IMR-90 (cell line): ENCODE measurements at regions of chr18 and their contacts with region 1.

Region 1: GRCh38 chr18:21851327-21851972 is 110.9 kb downstream of the MIB1 start:
- DNase-seq: peak; percentile 11
- ATAC-seq: peak; percentile 48
- H3K4me3 ChIP-seq: no peak overlapping the region
- H3K27ac ChIP-seq: no peak overlapping the region
- H3K4me1 ChIP-seq: no peaks in the 10 kb centered on the region
- H3K27me3 ChIP-seq: no peaks in the 10 kb centered on the region
- CTCF ChIP-seq: peak; percentile 38
- POLR2A ChIP-seq: no peak
- RAD21 ChIP-seq: no peak

Region 2: DNA sequence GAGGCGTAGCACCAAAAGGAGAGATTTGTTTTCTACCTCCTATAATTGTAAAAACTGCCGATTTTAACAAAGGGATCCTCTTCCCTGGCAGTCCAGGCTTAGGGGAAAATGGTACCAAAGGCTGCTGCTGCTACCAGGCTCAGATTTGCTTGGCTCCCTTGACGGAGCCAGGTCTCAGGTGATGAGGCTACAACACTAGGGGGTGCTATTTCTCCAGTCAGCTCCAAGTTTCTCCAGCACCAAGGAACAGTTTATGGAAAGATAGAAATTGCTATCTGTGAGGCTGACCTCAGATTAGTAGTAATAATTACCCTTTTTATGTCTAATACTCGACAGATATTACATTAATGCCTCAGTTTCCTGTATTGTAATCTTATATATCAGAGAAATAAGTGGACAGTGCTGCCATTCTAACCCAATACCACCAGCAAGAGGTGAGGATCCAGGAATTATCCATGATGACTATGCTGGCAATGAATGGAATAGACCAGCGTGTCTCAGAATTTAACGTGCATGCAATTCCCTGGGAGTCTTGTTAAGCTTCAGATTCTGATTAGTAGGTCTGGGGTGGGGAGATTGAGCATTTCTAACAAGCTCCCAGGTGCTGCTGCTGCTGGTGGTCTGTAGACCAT is 362.2 kb before region 1 on chr18:
- CTCF ChIA-PET with region 1: no interaction called
- POLR2A ChIA-PET with region 1: no interaction called
- dilution Hi-C with region 1: no loop called
- in situ Hi-C with region 1: no loop called
- intact Hi-C with region 1: loop called (anchors 5 kb)
- DNase-seq: peak; percentile 66
- ATAC-seq: peak; percentile 77
- H3K4me3 ChIP-seq: no peak overlapping the region
- H3K27ac ChIP-seq: no peak overlapping the region
- H3K4me1 ChIP-seq: 0 out of 2 replicates have a peak, but pooled peaks cover 2% of the 10 kb centered on the region
- H3K27me3 ChIP-seq: no peaks in the 10 kb centered on the region
- CTCF ChIP-seq: peak; percentile 76
- POLR2A ChIP-seq: no peak
- RAD21 ChIP-seq: peak; percentile 71

Region 3: DNA sequence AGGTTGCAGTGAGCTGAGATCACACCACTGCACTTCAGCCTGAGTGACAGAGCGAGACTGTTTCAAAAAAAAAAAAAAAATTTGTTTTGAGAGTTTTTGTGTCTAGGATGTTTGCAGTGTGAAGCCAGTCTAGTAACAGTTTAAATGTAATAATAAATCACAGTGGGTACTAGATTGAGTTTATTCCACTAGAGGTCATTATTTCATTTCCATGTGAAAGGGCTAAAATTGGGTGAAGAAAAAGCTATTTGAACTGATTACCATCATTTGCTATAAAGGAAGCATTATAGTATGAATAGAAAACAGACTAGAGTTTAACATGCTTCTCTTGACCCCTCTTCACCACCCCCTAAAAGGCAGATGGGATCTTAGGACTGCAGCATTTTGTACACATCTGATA is 219.1 kb before region 1 on chr18:
- CTCF ChIA-PET with region 1: no interaction called
- POLR2A ChIA-PET with region 1: no interaction called
- dilution Hi-C with region 1: no loop called
- in situ Hi-C with region 1: no loop called
- intact Hi-C with region 1: loop called (anchors 5 kb)
- DNase-seq: no peak
- ATAC-seq: no peak; the same call in 1 of the 2 replicates
- H3K4me3 ChIP-seq: no peak overlapping the region
- H3K27ac ChIP-seq: no peak overlapping the region
- H3K4me1 ChIP-seq: no peaks in the 10 kb centered on the region
- H3K27me3 ChIP-seq: no peaks in the 10 kb centered on the region
- CTCF ChIP-seq: no peak
- POLR2A ChIP-seq: no peak
- RAD21 ChIP-seq: no peak

Region 4: GRCh38 chr18:21740724-21741510 is 110.5 kb before region 1 on chr18 and contains the start of gene MIB1:
- CTCF ChIA-PET with region 1: no interaction called
- POLR2A ChIA-PET with region 1: no interaction called
- dilution Hi-C with region 1: no loop called
- in situ Hi-C with region 1: no loop called
- intact Hi-C with region 1: loop called (anchors 10 kb)
- DNase-seq: peak; percentile 41
- ATAC-seq: peak; percentile 80
- H3K4me3 ChIP-seq: peak within 1 kb of the TSS; percentile 78
- H3K27ac ChIP-seq: peak within 1 kb of the TSS; percentile 97
- H3K4me1 ChIP-seq: no peaks in the 10 kb centered on the region; the same call in 1 of the 2 replicates
- H3K27me3 ChIP-seq: no peaks in the 10 kb centered on the region
- CTCF ChIP-seq: no peak
- POLR2A ChIP-seq: peak; percentile 71
- RAD21 ChIP-seq: no peak
- total RNA-seq, gene MIB1: 80.1 and 83.6 TPM in 2 replicates

Region 5: DNA sequence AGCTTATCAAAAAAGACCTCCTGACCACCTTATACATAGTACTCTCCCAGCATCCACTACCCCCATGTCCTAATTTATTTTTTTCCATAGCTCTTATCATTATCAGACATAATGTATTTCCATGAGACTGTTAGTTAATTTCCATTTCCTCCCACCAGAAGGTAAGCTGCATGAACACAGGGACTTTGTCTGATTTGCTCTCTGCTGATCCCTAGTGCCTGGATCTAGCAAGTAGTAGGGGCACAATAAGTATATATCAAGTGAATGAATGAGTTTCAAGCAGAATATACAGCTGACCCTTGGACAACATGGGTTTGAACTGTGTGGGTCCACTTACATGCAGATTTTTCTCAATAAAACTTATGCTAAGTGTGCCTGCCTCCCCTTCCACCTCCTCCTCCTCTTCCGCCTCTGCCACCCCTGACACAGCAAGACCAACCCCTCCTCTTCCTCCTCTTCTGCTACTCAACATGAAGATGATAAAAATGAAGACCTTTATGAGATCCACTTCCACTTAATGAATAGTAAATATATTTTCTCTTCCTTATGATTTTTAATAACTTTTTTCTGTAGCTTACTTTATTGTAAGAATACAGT is 512.5 kb after region 1 on chr18:
- CTCF ChIA-PET with region 1: no interaction called
- POLR2A ChIA-PET with region 1: no interaction called
- dilution Hi-C with region 1: no loop called
- in situ Hi-C with region 1: no loop called
- intact Hi-C with region 1: no loop called
- DNase-seq: peak; percentile 29
- ATAC-seq: no peak
- H3K4me3 ChIP-seq: no peak overlapping the region
- H3K27ac ChIP-seq: no peak overlapping the region
- H3K4me1 ChIP-seq: no peaks in the 10 kb centered on the region
- H3K27me3 ChIP-seq: peaks cover 21% of the 10 kb centered on the region
- CTCF ChIP-seq: peak; percentile 30; the same call in 1 of the 2 replicates
- POLR2A ChIP-seq: no peak
- RAD21 ChIP-seq: peak; percentile 40